Sigmoid colon (tissue), 7 donors: ENCODE measurements at regions of chr3 and their contacts with region 1.

Region 1: GRCh38 chr3:138347960-138348753 is at the start of gene MRAS:
- DNase-seq: peak; percentile 90
- H3K4me3 ChIP-seq: peak within 1 kb of the TSS; percentile 73 to 95 (median 91)
- H3K27ac ChIP-seq: peak within 1 kb of the TSS; percentile 92 to 97 (median 96)
- H3K4me1 ChIP-seq: peaks cover 0 to 35% (median 25%) of the 10 kb centered on the region in 4 donors
- H3K27me3 ChIP-seq: no peaks in the 10 kb centered on the region
- CTCF ChIP-seq: peak in 1 of 4 experiments; percentile 38
- EP300 ChIP-seq: no peak
- POLR2A ChIP-seq: no peak
- total RNA-seq, gene MRAS: 24.4 to 36.8 (median 30.0) TPM

Region 2: DNA sequence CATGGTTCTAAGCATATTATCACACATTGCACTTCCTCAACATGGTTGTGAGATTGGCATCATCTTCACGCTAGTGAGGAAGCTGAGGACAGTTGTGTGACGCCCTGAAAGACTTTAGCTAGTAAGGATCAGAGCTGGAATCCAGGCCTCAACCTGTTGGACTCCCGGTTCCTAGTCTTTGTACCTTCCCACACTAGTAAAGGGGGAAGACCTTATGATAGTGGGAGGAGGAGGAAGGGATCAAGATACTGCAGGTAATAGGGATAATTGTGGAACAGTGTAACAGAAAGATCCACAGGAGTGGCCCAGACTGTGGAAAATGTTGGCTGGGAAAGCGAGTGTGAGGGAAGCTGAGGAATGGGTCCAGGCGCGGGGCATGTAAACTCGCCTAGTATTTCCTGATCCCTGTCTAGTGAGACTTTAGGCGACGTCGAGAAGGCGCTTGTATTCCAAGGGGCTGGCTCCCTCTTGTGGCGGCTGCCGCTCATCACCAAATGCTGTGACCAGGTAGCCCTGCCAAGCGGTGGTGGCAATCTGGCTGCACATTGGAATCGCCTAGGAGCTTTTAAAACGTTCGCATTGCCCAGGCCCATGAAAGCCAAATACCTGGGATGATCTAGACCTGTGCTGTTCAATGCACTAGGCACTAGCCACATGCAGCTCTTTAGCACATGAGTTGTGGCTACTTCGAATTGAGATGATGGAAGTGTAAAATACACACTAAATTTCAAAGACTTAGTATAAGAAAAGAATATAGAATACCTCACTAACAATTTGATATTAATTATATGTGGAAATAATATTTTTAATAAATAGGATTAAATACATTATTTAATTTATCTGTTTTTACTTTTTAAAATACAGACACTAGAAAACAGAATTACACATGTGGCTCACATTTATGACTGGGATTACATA is 377.0 kb before region 1 on chr3:
- intact Hi-C with region 1: no loop called
- DNase-seq: peak; percentile 78
- H3K4me3 ChIP-seq: no peak overlapping the region
- H3K27ac ChIP-seq: no peak overlapping the region
- H3K4me1 ChIP-seq: peaks cover 0 to 3% (median 0%) of the 10 kb centered on the region in 4 donors
- H3K27me3 ChIP-seq: no peaks in the 10 kb centered on the region
- CTCF ChIP-seq: peak; percentile 9 to 80 (median 54)
- EP300 ChIP-seq: no peak
- POLR2A ChIP-seq: no peak

Region 3: GRCh38 chr3:138381950-138382688 is 34.0 kb after region 1 on chr3:
- intact Hi-C with region 1: loop called (anchors 2 kb)
- DNase-seq: peak; percentile 88
- H3K4me3 ChIP-seq: no peak overlapping the region
- H3K27ac ChIP-seq: peak overlapping the region; percentile 82 to 85 (median 83)
- H3K4me1 ChIP-seq: peaks cover 0 to 26% (median 23%) of the 10 kb centered on the region in 4 donors
- H3K27me3 ChIP-seq: no peaks in the 10 kb centered on the region
- CTCF ChIP-seq: no peak
- EP300 ChIP-seq: no peak
- POLR2A ChIP-seq: no peak

Region 4: DNA sequence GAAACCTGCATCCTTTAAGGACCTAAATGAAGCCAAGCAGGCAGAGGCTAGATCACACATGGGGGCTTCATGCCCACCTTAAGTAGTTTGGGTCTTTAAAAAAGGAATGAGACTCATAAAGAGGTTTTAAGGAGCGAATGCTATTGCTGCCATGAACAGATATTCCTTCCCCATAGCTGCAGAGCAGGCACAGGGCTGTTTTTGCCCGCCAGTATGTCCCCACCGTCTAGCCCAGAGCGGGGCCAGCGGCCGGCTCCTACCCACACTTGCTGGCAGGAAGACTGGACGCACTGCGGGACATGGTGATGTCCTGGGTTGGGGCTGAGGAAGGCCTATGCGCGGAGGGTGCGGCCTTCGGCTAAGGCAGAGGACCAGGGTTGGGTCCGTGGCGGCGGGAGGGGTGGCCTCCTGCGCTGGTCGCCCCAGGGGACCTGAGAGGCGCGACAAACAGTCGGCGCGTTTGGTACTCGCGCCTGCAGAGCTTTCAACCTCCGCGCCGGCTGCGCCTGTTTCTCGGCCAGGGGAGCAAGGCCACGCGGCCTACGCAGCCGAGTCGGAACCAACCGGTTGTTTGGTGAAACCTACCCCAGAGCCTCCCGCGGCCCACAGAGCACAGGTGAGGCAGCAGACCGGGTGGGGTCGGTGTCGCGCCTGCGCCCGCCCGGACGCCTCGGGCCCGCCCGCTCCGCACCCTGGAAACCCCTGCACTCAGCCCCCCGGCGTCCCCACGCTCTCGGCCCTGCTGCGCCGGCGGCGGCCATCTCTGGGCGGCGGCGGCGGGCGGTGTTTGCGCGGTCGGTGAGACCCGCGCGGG is 260.4 kb after region 1 on chr3 and contains the start of gene FAIM:
- intact Hi-C with region 1: loop called (anchors 2 kb)
- DNase-seq: peak; percentile 85
- H3K4me3 ChIP-seq: peak within 1 kb of the TSS; percentile 47 to 91 (median 74)
- H3K27ac ChIP-seq: peak within 1 kb of the TSS; percentile 93 to 99 (median 96)
- H3K4me1 ChIP-seq: peaks cover 0 to 14% (median 12%) of the 10 kb centered on the region in 4 donors
- H3K27me3 ChIP-seq: no peaks in the 10 kb centered on the region
- CTCF ChIP-seq: no peak
- EP300 ChIP-seq: no peak
- POLR2A ChIP-seq: no peak
- total RNA-seq, gene FAIM: 6.6 to 15.3 (median 10.1) TPM